Common myeloid progenitor, CD34-positive (primary cell): ENCODE measurements at regions of chr1 and their contacts with region 1.

Region 1: DNA sequence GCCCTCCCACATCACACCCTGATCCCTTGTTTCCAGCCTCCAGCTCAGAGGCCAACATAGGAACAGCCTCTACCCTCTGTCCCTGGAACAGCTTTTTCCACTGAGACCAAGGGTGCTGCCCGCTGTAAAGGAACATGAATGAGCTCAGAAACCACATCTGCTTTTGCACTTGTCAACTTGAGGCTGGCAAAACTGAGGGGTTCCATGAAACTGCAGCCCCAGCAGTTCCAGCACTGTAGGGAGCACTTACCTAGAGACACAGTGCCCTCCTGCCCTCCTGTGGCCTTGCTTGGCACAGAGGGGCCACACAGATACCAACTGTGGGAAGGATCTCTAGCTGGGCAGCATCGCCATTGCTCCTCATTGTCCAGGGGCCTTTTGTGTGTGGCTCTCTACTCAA is 51.7 kb downstream of the ITPKB start:
- DNase-seq: peak; percentile 78 to 88 (median 88)
- H3K4me3 ChIP-seq: no peak overlapping the region
- H3K27ac ChIP-seq: no peak overlapping the region
- H3K4me1 ChIP-seq: peaks cover 14 to 56% (median 36%) of the 10 kb centered on the region in 4 experiments
- H3K27me3 ChIP-seq: no peaks in the 10 kb centered on the region

Region 2: GRCh38 chr1:226642876-226643576 is 44.4 kb before region 1 on chr1:
- CTCF ChIA-PET with region 1: interaction called, 213 read pairs
- POLR2A ChIA-PET with region 1: no interaction called
- DNase-seq: peak; percentile 81 to 92 (median 90)
- H3K4me3 ChIP-seq: peak overlapping the region in 5 of 7 experiments; percentile 2 to 55 (median 43)
- H3K27ac ChIP-seq: peak overlapping the region in 1 of 2 experiments; percentile 65
- H3K4me1 ChIP-seq: peaks cover 3 to 54% (median 45%) of the 10 kb centered on the region in 4 experiments
- H3K27me3 ChIP-seq: no peaks in the 10 kb centered on the region

Region 3: DNA sequence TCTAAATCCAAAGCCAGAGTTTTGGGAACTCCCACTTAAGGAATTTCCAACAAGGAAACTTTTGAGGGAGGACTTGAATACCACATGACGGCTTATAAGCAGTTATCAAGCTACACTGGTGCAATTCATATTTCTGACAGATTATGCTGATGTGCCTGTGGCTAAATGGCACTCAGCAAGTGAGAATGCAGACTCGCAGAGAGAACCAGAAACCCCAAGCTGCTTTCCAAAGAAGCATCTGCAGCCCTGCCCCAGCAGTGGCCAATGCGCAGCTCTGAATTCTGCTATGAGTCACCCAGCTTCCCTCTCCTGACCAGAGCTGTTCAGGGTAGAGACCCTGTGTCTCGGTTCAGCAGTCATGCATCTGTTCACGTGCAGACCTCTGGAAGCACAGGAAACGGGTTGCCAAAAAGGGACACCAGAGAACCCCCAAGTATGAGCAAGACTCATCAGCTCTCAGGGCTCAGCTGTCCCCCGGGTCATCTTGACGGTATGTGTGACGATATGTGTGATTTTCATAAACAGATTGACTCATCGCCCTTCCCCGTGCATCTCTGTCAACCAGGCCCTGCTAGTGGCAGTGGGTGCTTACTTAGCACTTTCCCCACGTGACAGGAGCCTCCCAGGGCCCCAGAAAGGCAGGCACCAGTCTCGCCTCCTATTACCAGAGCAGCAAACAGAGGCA is 24.6 kb before region 1 on chr1:
- CTCF ChIA-PET with region 1: interaction called, 40 read pairs
- POLR2A ChIA-PET with region 1: interaction called, 4 read pairs
- DNase-seq: peak; percentile 70 to 92 (median 89)
- H3K4me3 ChIP-seq: no peak overlapping the region
- H3K27ac ChIP-seq: peak overlapping the region in 1 of 2 experiments; percentile 54
- H3K4me1 ChIP-seq: peaks cover 29 to 85% (median 70%) of the 10 kb centered on the region in 4 experiments
- H3K27me3 ChIP-seq: no peaks in the 10 kb centered on the region

Region 4: GRCh38 chr1:226708342-226708780 is 20.9 kb after region 1 on chr1:
- CTCF ChIA-PET with region 1: interaction called, 20 read pairs
- POLR2A ChIA-PET with region 1: no interaction called
- DNase-seq: peak in 2 of 3 donors; percentile 47 to 59
- H3K4me3 ChIP-seq: no peak overlapping the region
- H3K27ac ChIP-seq: peak overlapping the region in 1 of 2 experiments; percentile 72
- H3K4me1 ChIP-seq: peaks cover 26 to 63% (median 57%) of the 10 kb centered on the region in 4 experiments
- H3K27me3 ChIP-seq: no peaks in the 10 kb centered on the region

Region 5: GRCh38 chr1:226827968-226828513 is 140.6 kb after region 1 on chr1:
- CTCF ChIA-PET with region 1: interaction called, 10 read pairs
- POLR2A ChIA-PET with region 1: no interaction called
- DNase-seq: peak; percentile 93 to 97 (median 96)
- H3K4me3 ChIP-seq: peak overlapping the region in 4 of 7 experiments; percentile 13 to 63 (median 48)
- H3K27ac ChIP-seq: peak overlapping the region; percentile 59 to 85
- H3K4me1 ChIP-seq: peaks cover 4 to 15% (median 9%) of the 10 kb centered on the region in 4 experiments
- H3K27me3 ChIP-seq: no peaks in the 10 kb centered on the region